Dorsolateral prefrontal cortex (tissue), 120 donors: ENCODE measurements at regions of chr1 and their contacts with region 1.

Region 1: GRCh38 chr1:67500413-67500959 is 70.3 kb upstream of the SERBP1 start:
- DNase-seq: peak; percentile 44 to 85 (median 77)
- H3K4me3 ChIP-seq: peak overlapping the region in 3 of 59 donors; percentile 20 to 29 (median 27)
- H3K27ac ChIP-seq: no peak overlapping the region
- H3K27me3 ChIP-seq: peaks cover 0 to 7% (median 0%) of the 10 kb centered on the region in 45 donors
- CTCF ChIP-seq: peak; percentile 86 to 100 (median 97)

Region 2: DNA sequence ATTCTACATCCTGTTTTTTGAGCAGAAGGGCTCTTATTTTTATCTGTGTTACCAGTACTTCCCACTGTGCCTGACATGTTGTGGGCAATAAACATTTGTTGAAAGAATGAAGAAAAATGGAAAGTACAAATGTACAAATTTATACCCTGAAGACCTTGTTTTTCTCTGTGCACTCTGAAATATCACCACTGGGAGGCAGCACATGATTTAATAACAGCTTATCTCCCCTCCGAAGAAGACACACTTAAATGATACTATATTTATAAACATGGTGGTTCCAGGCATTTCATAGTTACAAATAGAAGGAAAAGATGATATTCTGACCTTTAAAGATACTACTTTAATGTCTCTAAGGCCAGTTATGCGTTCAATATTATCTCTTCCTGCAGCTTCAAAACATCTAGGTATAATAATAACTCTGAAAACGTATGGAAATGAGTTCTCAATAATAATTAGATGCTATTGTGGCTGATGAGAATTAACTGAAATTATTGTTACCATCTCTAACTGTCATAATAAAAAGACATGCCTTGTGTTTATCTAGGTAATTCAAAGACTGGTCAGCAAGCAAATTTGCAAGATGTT is 735.4 kb before region 1 on chr1:
- intact Hi-C with region 1: loop called in 1 of 2 experiments (anchors 10 kb)
- DNase-seq: peak in 3 of 10 donors; percentile 5 to 50 (median 5)
- H3K4me3 ChIP-seq: peak overlapping the region in 15 of 59 donors; percentile 4 to 41 (median 30)
- H3K27ac ChIP-seq: no peak overlapping the region
- H3K27me3 ChIP-seq: no peaks in the 10 kb centered on the region
- CTCF ChIP-seq: peak; percentile 58 to 91 (median 81)

Region 3: GRCh38 chr1:67227196-67227595 is 273.3 kb before region 1 on chr1:
- intact Hi-C with region 1: loop called (anchors 2 to 5 kb)
- DNase-seq: no peak
- H3K4me3 ChIP-seq: no peak overlapping the region
- H3K27ac ChIP-seq: no peak overlapping the region
- H3K27me3 ChIP-seq: peaks cover 0 to 9% (median 0%) of the 10 kb centered on the region in 45 donors
- CTCF ChIP-seq: no peak

Region 4: DNA sequence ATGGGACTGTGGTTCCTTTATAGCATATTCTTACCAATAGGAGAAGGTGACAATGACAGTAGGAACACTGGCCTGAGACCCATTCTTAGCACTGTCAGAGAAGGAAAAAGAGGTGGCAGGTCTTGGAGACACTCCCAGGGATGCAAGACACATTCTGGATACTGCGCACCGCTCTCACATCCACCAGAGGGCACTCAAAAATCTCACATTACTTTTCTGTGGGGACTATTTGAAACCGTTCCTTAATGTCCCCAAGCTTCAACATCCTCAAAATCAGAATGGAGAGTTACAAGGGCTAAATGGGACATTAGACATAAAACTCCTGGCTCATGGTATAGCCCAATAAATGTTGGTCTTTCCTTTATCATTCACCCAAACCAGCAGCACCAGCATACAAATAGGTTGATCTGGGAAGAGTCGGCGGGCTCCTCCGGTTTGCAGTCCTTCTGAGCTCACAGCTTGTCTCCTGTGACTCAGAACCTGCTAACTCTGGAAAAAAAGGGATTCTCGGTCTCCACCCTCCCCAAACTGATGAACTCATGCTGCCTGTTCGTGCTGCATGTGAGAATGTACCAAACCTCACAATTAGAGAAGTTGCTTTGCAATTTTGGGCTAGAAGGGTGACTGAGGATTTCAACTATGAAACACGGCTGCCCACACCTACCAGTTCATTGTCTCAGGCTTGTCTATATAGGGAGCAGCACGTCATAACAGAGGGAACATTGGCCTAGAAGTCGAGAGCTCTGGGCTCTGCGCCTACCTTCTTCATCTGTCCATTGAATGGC is 152.6 kb before region 1 on chr1:
- intact Hi-C with region 1: loop called (anchors 2 kb)
- DNase-seq: peak in 7 of 10 donors; percentile 10 to 52 (median 42)
- H3K4me3 ChIP-seq: no peak overlapping the region
- H3K27ac ChIP-seq: peak overlapping the region in 5 of 59 donors; percentile 1 to 28 (median 10)
- H3K27me3 ChIP-seq: no peaks in the 10 kb centered on the region
- CTCF ChIP-seq: peak; percentile 29 to 89 (median 68)

Region 5: DNA sequence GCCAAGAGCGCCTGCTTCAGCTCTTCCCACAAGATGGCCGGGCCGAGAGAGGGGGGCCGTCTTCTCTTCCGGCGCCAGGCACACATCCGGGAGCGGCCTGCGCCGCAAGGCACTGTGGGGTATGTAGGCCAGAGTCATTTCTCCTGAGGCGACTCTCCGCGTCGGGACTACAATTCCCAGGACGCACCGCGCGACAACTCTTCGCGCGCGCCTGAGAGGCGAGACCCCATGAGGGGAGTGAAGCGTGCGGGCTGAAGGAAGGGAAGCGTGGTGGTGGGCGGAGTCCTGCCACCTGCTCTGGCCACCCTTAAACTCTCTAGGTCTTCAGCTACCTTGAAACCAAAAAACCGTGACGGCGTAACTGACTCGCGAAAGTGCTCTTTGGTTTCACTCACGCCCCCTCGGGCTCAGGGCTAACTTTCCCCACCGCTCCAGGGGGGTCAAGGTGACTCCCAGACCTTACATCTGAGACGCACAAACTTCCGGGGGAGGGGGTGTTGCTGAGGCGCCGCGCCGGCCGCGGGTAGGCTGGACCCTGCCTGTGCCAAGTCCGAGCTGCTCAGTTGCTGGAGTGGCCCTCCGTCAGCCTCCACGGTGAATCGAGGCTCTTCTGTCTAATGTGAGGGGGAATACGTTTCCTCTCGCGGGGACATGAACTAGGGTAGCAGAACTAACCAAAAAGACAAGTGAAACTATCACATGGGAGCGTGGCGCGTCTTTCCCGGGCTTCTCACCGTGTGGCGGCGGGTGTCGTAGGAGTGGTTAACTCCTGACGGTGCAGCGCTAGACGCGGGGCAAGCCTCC is 69.9 kb before region 1 on chr1 and contains the start of gene SERBP1:
- intact Hi-C with region 1: loop called in 1 of 2 experiments (anchors 5 kb)
- DNase-seq: peak; percentile 94 to 97 (median 96)
- H3K4me3 ChIP-seq: peak within 1 kb of the TSS; percentile 62 to 96 (median 86)
- H3K27ac ChIP-seq: peak within 1 kb of the TSS; percentile 36 to 95 (median 85)
- H3K27me3 ChIP-seq: no peaks in the 10 kb centered on the region
- CTCF ChIP-seq: peak in 15 of 56 donors; percentile 1 to 42 (median 16)
- total RNA-seq, gene SERBP1: 69.2 to 109 (median 88.4) TPM

Region 6: GRCh38 chr1:67441183-67441582 is 59.3 kb before region 1 on chr1:
- intact Hi-C with region 1: no loop called
- DNase-seq: peak in 1 of 10 donors; percentile 15
- H3K4me3 ChIP-seq: no peak overlapping the region
- H3K27ac ChIP-seq: peak overlapping the region in 1 of 59 donors; percentile 6
- H3K27me3 ChIP-seq: peaks cover 0 to 3% (median 0%) of the 10 kb centered on the region in 45 donors
- CTCF ChIP-seq: no peak